ENCODE measurements at regions of chr3 and their contacts with region 1.

Region 1: DNA sequence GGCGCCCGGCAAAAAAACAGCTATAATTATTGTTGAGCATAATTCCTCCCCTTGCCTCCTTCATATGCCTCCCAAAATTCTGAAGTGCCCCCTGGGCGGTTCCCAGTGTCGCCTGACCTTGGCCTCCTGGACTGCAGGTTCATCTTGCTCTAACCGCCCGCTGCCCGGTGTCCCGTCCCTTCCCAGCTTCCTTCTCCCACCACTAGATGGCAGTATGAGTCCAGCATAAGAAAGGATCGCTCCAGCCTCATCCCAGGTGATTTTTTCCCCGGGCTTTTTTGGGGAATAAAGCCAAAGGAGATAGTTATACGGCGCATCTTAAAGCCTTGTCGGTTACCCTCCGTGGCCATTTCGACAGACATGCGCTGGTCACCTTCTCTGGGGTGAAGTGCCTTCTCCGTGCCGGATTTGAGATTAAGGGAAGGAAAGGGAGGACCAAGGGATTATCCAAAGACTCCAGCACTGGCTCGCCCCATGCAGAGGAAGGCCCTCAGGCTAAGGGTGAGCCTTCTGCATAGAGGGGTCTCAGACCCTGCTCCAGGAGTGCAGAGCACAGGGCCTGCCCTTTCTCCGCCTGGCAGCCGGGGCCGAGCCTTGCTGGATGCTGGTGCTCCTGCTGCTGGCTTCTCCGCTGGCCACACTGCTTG is 45.8 kb upstream of the TRA2B start:
- ATAC-seq: peak; percentile 66 to 98 (median 88)
- H3K4me3 ChIP-seq: peak overlapping the region in 2 of 5 donors; percentile 9 to 15
- H3K27ac ChIP-seq: no peak overlapping the region
- H3K4me1 ChIP-seq: peaks cover 0 to 2% of the 10 kb centered on the region in 2 donors

Region 2: GRCh38 chr3:185423178-185423577 is 560.4 kb before region 1 on chr3:
- in situ Hi-C with region 1: no loop called
- ATAC-seq: peak in 5 of 8 experiments; percentile 29 to 57 (median 47)
- H3K4me3 ChIP-seq: no peak overlapping the region
- H3K27ac ChIP-seq: peak overlapping the region in 1 of 2 donors; percentile 4
- H3K4me1 ChIP-seq: peaks cover 0 to 3% of the 10 kb centered on the region in 2 donors

Region 3: DNA sequence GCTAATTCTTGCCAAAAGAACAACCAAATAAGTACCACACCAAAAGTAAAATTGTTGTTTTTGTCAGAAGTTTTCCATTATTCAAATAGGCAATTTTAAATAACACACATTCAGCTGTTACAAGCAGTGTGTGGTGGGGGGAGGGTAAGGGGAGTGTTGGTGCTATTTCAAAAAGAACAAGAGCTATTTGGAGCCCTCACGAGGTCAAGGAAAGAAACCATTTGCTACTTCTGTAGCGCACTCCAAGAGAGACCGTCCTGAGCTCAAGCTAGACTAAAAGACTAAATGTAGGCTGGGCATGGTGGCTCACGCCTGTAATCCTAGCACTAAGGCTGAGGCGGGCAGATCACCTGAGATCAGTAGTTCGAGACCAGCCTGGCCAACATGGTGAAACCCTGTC is 137.6 kb before region 1 on chr3:
- in situ Hi-C with region 1: no loop called
- ATAC-seq: peak in 2 of 8 experiments; percentile 47 to 95
- H3K4me3 ChIP-seq: no peak overlapping the region
- H3K27ac ChIP-seq: no peak overlapping the region
- H3K4me1 ChIP-seq: no peaks in the 10 kb centered on the region

Region 4: GRCh38 chr3:186108941-186109865 is 125.6 kb after region 1 on chr3 and contains the start of gene ETV5:
- in situ Hi-C with region 1: loop called in 2 of 9 experiments (anchors 10 to 25 kb)
- ATAC-seq: peak; percentile 87 to 92 (median 90)
- H3K4me3 ChIP-seq: peak within 1 kb of the TSS; percentile 52 to 75 (median 69)
- H3K27ac ChIP-seq: peak within 1 kb of the TSS; percentile 55 to 77
- H3K4me1 ChIP-seq: peaks cover 7 to 10% of the 10 kb centered on the region in 2 donors
- total RNA-seq, gene ETV5: 4.0 to 36.7 (median 10.8) TPM

Region 5: DNA sequence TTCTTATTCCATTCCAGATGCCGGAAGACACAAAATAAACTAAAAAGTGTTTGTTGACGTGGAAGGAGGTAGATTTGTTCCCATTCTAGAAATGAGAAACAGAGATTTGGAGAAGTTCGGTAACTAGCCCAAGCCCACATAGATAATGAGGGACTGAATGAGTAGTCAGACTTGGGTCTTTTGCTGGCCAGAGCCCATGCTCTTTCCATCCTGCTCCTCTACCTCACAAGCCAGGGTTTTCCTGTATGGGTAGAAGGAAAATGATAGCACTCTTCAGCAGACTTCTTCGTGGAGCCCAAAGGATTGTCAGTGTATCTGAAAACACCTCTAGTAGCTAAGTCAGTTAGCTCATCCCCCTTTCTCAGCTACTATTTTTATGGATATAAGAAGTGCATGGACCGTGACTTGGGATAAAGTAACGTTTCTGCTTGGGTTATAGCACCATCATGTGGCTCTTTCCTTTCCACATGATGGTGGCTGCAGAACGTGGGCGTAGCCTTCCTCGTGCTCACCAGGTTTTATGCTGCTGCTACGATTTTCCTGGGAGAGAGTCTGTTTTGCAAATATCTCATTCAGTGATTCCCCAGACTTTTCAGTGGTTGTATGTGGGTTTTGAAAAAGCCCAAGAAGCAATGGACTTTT is 293.8 kb after region 1 on chr3:
- in situ Hi-C with region 1: loop called in 6 of 9 experiments (anchors 10 to 25 kb)
- ATAC-seq: peak in 7 of 8 experiments; percentile 44 to 99 (median 67)
- H3K4me3 ChIP-seq: no peak overlapping the region
- H3K27ac ChIP-seq: no peak overlapping the region
- H3K4me1 ChIP-seq: no peaks in the 10 kb centered on the region

Region 6: GRCh38 chr3:186534113-186534669 is 550.6 kb after region 1 on chr3:
- in situ Hi-C with region 1: loop called in 8 of 9 experiments (anchors 10 to 25 kb)
- ATAC-seq: no peak
- H3K4me3 ChIP-seq: no peak overlapping the region
- H3K27ac ChIP-seq: no peak overlapping the region
- H3K4me1 ChIP-seq: peaks cover 8 to 12% of the 10 kb centered on the region in 2 donors

Measured in motor neuron (in vitro differentiated cells).